Ascending aorta (tissue), 2 donors: ENCODE measurements at regions of chr6 and their contacts with region 1.

Region 1: GRCh38 chr6:117976030-117976651 is 69.1 kb downstream of the SLC35F1 start:
- DNase-seq: no peak
- H3K4me3 ChIP-seq: no peak overlapping the region
- H3K27ac ChIP-seq: no peak overlapping the region
- H3K4me1 ChIP-seq: no peaks in the 10 kb centered on the region
- H3K27me3 ChIP-seq: no peaks in the 10 kb centered on the region
- CTCF ChIP-seq: peak; percentile 13 to 47 (median 46)

Region 2: GRCh38 chr6:118263921-118264486 is 287.9 kb after region 1 on chr6:
- intact Hi-C with region 1: loop called (anchors 1 kb)
- DNase-seq: no peak
- H3K4me3 ChIP-seq: no peak overlapping the region
- H3K27ac ChIP-seq: no peak overlapping the region
- H3K4me1 ChIP-seq: no peaks in the 10 kb centered on the region
- H3K27me3 ChIP-seq: no peaks in the 10 kb centered on the region
- CTCF ChIP-seq: peak in 1 of 3 experiments; percentile 31

Region 3: GRCh38 chr6:118317581-118318563 is 341.7 kb after region 1 on chr6:
- intact Hi-C with region 1: no loop called
- DNase-seq: peak in 1 of 2 donors; percentile 65
- H3K4me3 ChIP-seq: peak overlapping the region; percentile 13 to 23
- H3K27ac ChIP-seq: peak overlapping the region; percentile 83 to 91
- H3K4me1 ChIP-seq: peaks cover 5 to 62% of the 10 kb centered on the region in 2 donors
- H3K27me3 ChIP-seq: no peaks in the 10 kb centered on the region
- CTCF ChIP-seq: no peak

Region 4: DNA sequence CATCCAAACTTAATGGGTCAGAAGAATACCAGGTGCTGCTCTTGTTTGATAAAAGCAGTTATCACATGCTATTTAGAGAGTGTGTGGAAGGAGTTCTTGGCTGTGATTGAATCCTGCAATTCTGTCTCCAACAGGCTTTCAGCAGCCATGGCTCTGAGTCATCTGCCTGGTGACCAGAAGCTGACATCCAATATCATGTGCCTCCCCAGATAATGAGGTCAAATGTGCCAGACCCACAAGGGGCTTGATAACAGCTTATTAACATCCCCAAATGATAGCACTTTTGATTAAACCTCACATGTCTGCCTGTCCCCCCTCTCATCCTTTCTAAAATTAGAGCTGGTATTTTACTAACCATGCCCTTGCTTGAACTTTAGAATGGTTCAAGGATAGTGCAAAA is 396.3 kb after region 1 on chr6:
- intact Hi-C with region 1: no loop called
- DNase-seq: no peak
- H3K4me3 ChIP-seq: no peak overlapping the region
- H3K27ac ChIP-seq: no peak overlapping the region
- H3K4me1 ChIP-seq: no peaks in the 10 kb centered on the region
- H3K27me3 ChIP-seq: no peaks in the 10 kb centered on the region
- CTCF ChIP-seq: no peak